ENCODE measurements at regions of chr9 and their contacts with region 1.

Region 1: DNA sequence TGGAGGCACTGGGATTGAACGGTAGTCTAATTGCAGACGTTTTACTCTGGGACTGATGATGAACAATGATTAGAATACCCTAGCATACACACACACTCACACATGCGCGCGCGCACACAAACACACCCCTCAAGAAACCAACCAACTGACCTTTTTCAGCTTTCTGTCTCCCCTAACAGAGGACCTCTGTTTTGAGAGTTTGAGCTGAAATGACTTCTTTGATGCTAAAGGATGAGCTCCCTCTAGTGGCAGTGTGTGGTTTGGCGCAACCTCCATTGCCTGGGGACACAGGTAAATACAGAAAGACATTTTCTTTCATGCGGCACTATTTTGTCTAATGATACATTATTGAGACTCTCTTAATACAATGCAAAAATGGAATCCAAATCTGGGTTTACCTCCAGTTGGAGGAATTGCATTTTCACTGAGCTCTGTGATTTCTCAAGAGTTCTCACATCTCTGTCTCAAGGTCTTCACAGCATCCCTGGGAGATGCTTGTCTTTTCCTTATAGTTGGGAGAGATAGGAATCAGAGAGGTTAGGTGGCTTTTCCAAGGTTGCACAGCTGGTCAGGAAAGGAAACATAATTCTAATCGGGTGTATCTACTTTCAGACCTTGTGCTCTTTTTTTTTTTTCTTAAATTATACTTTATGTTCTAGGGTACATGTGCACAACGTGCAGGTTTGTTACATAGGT is 187.5 kb downstream of the TMEM38B start:
- DNase-seq: peak; percentile 83
- H3K4me3 Mint-ChIP-seq: no peak overlapping the region
- H3K27ac Mint-ChIP-seq: no peak overlapping the region
- H3K4me1 Mint-ChIP-seq: peaks cover 30% of the 10 kb centered on the region
- H3K27me3 Mint-ChIP-seq: peaks cover 33% of the 10 kb centered on the region

Region 2: DNA sequence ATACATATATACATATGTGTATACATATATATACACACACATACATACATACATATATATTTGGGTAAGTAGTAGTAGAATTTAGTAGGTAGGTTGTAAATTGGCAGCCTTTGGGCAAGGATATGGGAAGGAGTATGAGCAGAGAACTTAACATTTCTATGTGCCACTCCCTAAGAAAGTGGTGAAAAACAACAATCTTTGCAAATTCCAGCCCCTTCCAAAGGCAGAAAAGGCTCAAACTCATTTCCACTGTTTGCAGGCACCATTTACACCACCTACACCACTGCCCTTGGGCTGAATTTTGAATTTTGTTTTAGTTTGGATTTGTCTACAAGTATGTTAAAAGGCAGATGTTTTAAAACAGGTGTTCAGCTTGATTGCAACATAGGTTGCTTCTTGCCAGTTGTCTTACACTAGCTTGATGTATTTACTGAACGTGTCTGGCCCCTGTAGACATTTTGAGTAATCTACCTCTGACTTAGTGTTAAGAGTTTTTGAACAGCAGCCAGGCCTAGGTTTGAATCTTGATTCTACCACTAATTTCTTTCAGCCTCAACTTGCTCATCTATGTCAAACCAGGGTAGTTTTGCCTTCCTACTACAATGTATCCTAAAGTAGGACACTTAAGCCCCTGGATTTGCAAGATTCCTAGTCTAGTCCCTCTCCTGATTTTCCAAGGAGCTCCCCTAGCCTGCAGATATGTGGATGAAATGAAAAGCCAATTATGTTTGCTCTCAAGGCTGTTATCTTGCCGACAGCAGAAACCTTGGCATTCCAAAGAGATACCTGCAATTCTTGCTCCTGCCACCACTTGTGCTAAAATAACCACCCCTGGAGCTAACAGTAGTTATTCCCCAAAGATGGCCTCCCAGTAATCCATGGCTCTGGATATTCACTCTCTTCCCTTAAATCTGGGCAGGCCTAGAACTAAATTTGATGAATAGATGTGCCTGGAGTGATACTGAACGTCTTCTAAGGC is 793.6 kb before region 1 on chr9:
- CTCF ChIA-PET with region 1: no interaction called
- DNase-seq: no peak
- H3K4me3 Mint-ChIP-seq: no peak overlapping the region
- H3K27ac Mint-ChIP-seq: no peak overlapping the region
- H3K4me1 Mint-ChIP-seq: no peaks in the 10 kb centered on the region
- H3K27me3 Mint-ChIP-seq: peaks cover 7% of the 10 kb centered on the region

Region 3: DNA sequence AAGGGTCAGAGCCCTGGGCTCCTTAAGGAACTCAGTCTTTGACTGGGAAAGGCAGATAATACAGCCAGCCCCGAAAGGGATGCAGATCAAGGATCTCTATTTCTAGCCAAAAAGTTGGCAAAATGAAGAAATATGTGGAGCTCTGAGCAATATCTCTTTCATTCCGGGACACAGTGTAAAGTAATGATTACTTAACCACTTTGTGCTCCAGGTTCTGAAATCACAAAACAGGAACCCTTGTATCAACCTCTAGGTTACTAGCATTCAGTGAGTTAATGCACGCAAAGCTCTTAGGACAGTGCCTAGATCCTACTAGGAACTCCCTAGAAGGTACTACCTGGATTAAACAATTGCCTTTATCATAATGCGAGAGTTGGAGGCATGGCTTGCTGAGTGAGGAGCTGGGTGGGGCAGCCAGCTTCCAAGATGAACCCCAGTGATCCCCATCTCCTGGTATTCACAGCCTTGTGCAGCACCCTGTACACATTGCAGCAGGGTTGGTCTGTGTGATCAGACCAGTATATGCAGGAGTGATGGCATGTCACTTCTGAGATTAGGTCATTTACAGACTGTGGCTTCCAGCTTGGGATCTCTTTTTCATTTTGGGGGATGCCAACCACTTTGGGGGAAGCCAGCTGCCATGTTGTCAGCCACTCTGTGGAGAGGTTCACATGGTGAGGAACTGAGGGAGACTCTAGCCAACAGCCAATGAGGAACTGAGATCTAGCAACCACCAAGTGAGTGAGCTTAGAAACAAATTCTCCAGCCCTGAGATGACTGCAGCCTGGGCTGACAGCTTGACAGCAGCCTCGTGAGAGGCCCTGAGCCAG is 740.4 kb before region 1 on chr9:
- CTCF ChIA-PET with region 1: no interaction called
- DNase-seq: no peak
- H3K4me3 Mint-ChIP-seq: no peak overlapping the region
- H3K27ac Mint-ChIP-seq: no peak overlapping the region
- H3K4me1 Mint-ChIP-seq: peaks cover 6% of the 10 kb centered on the region
- H3K27me3 Mint-ChIP-seq: peaks cover 38% of the 10 kb centered on the region

Region 4: DNA sequence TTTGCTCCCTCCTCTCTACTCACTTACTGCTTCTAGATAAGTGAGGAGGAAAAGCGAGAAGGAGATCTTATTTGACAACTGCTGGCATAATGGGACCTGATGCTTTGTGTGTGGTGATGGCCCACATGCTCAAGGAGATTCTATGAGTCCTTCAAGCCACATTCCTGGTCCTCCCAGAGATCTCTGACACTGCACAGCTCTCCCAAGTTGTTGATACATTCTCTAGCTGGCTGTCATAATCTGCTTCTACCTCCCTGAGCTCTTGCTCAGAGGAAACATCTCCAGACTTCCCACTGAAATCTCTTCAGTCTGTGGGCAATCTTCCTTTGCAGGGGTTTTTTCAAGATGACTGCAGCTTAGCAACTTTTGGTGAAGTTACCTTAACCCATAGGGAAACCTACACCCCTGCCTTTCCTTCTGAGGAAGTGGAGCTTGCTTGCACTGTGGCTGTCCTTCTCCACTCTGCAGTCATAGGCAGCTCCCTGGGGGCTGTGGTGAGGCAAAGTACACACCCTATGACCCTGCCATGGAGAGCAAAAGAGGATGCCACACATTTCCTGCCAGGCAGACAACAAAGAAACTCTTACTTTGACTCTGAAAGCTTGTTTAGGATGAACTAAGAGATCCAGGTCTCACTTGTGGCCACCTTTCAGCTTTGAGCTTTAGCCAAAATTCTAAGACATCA is 23.7 kb before region 1 on chr9:
- CTCF ChIA-PET with region 1: interaction called, 12 read pairs
- DNase-seq: peak; percentile 64
- H3K4me3 Mint-ChIP-seq: no peak overlapping the region
- H3K27ac Mint-ChIP-seq: peak overlapping the region; percentile 88
- H3K4me1 Mint-ChIP-seq: peaks cover 30% of the 10 kb centered on the region
- H3K27me3 Mint-ChIP-seq: peaks cover 24% of the 10 kb centered on the region

Measured in activated naive CD4-positive, alpha-beta T cell treated with anti-CD3 and anti-CD28 coated beads, Interleukin-2, amount 10 ng/mL, durations not matched to agents 7 days and 5 days (primary cell).